ENCODE measurements at regions of chr1 and their contacts with region 1.

Region 1: DNA sequence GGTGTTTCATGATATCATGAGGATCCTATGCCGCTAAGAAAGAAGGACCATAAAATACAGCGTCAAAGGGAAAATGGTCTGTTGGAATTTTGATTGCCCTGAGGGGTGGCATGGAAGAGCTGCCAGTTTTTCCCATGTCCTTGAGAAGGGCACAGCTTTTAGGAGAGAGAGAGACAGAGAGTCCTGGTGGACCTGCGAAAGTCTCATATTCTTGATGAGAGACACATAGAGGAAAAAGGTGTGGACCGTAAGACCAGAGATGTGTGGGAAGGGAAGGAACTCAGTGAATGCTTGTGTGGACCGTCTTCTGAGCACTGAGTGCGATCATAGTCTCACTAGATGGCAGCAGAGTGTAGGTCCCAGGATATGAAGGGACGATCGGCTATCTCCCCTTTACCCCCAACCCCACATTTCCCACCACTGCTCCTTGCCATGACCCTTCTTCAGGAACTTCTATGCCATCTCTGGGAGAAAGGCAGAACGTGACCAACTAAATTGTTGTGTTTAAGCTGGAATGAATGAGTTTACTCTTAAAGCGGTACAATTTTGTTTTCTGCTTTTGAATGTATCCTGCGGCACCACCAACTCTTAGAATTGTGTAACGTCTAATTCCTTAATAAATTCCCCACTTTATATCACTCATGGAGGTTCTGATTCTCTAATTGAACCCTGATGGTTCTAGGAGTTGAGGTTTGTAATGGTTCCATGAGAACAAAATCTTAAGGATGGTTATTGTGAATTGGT is 117.7 kb downstream of the CTH start:
- H3K4me3 ChIP-seq: no peak overlapping the region
- H3K27ac ChIP-seq: no peak overlapping the region
- H3K4me1 ChIP-seq: no peaks in the 10 kb centered on the region
- CTCF ChIP-seq: peak; percentile 85

Region 2: DNA sequence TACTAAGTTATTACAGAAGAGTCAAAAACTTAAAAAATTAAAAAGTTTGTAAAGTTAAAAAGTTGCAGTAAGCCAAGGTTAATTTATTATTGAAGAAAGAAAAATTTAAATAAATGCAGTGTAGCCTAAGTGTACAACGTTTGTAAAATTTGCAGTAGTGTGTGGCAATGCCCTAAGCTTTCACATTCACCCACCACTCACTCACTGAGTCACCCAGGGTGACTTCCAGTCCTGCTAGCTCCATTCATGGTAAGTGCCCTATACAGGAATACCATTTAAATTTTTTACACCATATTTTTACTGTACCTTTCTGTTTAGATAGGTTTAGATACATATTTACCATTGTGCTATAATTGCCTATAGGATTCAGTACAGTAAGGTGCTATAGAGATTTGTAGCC is 29.1 kb before region 1 on chr1:
- CTCF ChIA-PET with region 1: no interaction called
- POLR2A ChIA-PET with region 1: no interaction called
- H3K4me3 ChIP-seq: no peak overlapping the region
- H3K27ac ChIP-seq: no peak overlapping the region
- H3K4me1 ChIP-seq: peaks cover 9% of the 10 kb centered on the region
- CTCF ChIP-seq: no peak

Region 3: GRCh38 chr1:70567167-70567566 is 38.4 kb after region 1 on chr1:
- CTCF ChIA-PET with region 1: no interaction called
- POLR2A ChIA-PET with region 1: no interaction called
- H3K4me3 ChIP-seq: no peak overlapping the region
- H3K27ac ChIP-seq: no peak overlapping the region
- H3K4me1 ChIP-seq: no peaks in the 10 kb centered on the region
- CTCF ChIP-seq: no peak

Region 4: DNA sequence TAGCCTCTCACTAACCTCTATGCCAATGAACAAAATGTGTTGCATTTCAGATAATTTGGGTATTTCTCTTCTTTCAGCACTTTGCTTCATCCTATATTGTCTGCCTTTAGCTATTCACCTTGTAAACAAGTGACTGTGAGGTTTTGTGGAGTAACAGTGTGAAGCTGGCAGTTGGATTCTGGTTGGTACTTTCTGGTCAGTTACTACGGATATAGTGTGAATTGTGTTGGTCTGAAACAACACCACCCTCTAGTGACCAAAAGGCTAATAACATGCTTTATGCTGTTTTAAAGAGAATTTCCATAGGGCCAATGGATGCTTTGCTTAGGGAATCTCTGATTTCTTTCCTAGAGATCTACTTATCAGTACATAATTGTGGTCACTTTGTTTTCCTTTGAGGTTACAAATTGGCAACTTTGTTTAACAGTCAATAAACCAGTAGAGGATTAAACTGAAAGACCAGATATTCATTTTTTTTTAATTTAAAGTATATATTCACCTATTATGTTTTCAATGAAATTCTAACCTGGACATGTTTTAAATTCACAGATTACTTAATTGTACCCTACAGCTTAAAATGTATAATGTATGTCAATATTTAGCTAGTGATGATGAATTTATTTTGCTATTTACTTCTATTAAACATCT is 521.3 kb after region 1 on chr1:
- CTCF ChIA-PET with region 1: interaction called, 41 read pairs
- POLR2A ChIA-PET with region 1: no interaction called
- H3K4me3 ChIP-seq: no peak overlapping the region
- H3K27ac ChIP-seq: no peak overlapping the region
- H3K4me1 ChIP-seq: no peaks in the 10 kb centered on the region
- CTCF ChIP-seq: peak; percentile 44; the same call in 1 of the 2 replicates

Measured in HEK293 (cell line).